GM23248 (cell line): ENCODE measurements at regions of chr7 and their contacts with region 1.

Region 1: GRCh38 chr7:138738551-138739335 is 37.6 kb upstream of the SVOPL start:
- DNase-seq: peak; percentile 82
- H3K4me3 ChIP-seq: no peak overlapping the region
- H3K27ac ChIP-seq: no peak overlapping the region
- H3K4me1 ChIP-seq: no peaks in the 10 kb centered on the region
- H3K27me3 ChIP-seq: peaks cover 4% of the 10 kb centered on the region; the same call in 1 of the 2 replicates

Region 2: DNA sequence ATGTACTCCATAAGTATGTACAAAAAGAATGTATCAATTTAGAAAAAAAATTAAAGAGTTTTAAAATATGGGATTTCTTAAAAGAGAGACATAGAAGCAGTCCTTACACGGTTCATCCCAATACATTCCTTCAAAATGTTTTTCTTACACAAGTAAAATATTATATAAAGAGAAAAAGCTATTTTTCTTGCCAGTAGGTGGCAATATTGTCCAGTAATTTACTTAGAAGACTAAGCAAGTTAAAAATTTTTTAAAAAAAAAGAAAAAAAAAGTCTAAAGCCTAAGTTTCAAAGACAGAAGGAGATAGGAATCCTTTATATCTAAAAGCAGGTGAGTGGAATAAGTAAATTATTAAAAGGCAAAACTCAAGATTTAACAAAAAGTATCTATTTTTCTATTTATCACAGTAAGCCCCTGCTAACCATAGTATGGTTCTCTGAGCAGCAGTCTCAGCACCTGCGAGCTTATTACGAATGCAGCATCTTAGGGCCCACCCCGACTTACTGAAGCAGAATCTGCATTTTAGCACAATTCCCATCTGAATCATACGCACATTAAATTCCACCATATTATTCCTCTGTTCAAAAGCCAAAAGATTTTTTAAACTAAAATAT is 1132.6 kb before region 1 on chr7:
- in situ Hi-C with region 1: loop called (anchors 25 kb)
- DNase-seq: peak; percentile 64
- H3K4me3 ChIP-seq: no peak overlapping the region
- H3K27ac ChIP-seq: no peak overlapping the region
- H3K4me1 ChIP-seq: no peaks in the 10 kb centered on the region
- H3K27me3 ChIP-seq: no peaks in the 10 kb centered on the region

Region 3: DNA sequence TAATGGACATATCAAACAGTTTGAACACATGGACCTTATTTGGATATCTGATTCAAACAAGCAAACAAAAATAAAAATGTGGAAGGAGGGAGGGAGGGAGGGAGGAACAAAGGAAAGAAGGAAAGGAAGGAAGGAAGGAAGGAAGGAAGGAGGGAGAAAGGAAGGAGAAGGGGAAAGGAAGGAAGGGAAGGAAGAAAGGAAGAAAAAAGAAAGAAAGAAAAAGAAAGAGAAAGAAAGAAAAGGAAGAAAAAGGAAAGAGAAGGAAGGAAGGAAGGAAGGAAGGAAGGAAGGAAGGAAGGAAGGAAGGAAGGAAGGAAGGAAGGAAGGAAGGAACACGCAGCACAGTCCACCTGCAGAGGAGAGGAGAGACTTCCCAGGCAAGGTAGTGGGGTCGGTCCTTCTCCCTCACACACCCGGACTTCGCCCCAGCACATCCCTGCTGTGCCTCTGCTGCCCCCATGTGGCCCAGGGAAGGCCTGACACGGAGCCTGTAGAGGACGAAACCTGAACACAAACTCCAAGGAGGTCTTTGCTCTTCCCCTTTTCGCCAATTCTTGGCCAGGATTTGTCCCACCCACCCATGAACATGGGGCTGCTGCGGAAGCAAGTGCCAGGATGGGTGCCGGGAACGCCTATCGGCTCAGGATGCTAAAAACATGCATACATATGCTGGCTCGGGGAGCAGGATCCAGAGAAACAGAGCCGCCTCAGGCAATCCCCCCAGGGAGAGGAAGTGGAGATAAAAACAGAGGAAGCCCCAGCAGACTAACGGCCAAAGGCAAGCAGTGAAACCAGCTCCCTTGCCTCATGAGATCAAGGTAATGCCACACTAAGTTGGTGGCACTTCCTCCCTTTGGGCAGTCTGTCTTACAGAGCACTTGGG is 839.7 kb before region 1 on chr7:
- in situ Hi-C with region 1: loop called (anchors 25 kb)
- DNase-seq: peak; percentile 85
- H3K4me3 ChIP-seq: no peak overlapping the region
- H3K27ac ChIP-seq: peak overlapping the region; percentile 3; the same call in 1 of the 2 replicates
- H3K4me1 ChIP-seq: no peaks in the 10 kb centered on the region; the same call in 1 of the 2 replicates
- H3K27me3 ChIP-seq: no peaks in the 10 kb centered on the region

Region 4: GRCh38 chr7:138161600-138162081 is 577.1 kb before region 1 on chr7:
- in situ Hi-C with region 1: loop called (anchors 25 kb)
- DNase-seq: peak; percentile 94
- H3K4me3 ChIP-seq: no peak overlapping the region
- H3K27ac ChIP-seq: no peak overlapping the region
- H3K4me1 ChIP-seq: no peaks in the 10 kb centered on the region
- H3K27me3 ChIP-seq: no peaks in the 10 kb centered on the region

Region 5: GRCh38 chr7:138388673-138389491 is 349.9 kb before region 1 on chr7:
- in situ Hi-C with region 1: no loop called
- DNase-seq: no peak
- H3K4me3 ChIP-seq: no peak overlapping the region
- H3K27ac ChIP-seq: no peak overlapping the region
- H3K4me1 ChIP-seq: no peaks in the 10 kb centered on the region
- H3K27me3 ChIP-seq: no peaks in the 10 kb centered on the region

Region 6: DNA sequence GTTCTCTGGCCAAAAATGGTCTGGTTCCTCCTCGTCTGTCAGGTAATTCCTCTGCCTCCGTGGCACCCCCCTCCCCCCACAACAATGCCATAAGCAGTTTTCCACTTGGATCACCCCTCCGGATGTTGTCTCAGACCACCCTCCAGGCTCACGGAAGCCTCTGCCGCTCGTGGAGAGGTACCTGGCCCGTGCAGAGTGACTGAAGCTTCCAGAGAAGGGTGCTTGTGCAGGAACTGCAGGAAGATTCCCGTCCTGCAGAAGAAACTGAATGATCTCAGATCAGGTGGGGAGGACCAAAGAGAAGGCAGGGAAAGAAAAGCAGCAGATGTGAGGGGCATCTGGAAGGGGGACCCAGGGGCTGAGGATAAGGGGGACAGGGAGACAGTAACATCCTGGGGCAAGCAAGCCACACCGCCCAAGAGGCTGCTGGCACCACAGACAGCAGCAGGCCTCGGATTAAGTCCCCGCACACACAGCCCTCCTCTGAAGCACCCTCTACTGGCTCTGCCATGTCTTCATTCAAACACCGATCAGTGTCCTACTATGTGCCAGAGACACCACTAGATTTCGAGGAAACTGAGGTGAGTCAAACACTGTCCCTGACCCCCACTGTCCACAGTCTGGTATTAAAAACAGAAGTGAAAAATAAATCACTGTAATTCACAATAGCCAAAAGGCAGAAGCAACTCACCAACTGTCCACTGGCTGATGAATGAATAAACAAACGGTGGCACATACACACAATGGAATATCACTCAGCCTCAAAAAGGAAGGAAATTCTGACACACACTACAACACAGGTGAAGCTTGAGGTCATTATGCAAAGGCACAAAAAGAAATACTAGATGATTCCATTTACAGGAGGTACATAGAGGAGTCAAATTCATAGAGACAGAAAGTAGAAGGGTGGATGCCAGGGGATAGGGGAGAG is 216.1 kb after region 1 on chr7:
- in situ Hi-C with region 1: no loop called
- DNase-seq: no peak
- H3K4me3 ChIP-seq: no peak overlapping the region
- H3K27ac ChIP-seq: no peak overlapping the region
- H3K4me1 ChIP-seq: 0 out of 2 replicates have a peak, but pooled peaks cover 4% of the 10 kb centered on the region
- H3K27me3 ChIP-seq: no peaks in the 10 kb centered on the region